Posterior vena cava (tissue), 2 donors: ENCODE measurements at regions of chr3 and their contacts with region 1.

Region 1: GRCh38 chr3:48402281-48402732 is 27.6 kb downstream of the PLXNB1 start:
- DNase-seq: peak; percentile 98

Region 2: DNA sequence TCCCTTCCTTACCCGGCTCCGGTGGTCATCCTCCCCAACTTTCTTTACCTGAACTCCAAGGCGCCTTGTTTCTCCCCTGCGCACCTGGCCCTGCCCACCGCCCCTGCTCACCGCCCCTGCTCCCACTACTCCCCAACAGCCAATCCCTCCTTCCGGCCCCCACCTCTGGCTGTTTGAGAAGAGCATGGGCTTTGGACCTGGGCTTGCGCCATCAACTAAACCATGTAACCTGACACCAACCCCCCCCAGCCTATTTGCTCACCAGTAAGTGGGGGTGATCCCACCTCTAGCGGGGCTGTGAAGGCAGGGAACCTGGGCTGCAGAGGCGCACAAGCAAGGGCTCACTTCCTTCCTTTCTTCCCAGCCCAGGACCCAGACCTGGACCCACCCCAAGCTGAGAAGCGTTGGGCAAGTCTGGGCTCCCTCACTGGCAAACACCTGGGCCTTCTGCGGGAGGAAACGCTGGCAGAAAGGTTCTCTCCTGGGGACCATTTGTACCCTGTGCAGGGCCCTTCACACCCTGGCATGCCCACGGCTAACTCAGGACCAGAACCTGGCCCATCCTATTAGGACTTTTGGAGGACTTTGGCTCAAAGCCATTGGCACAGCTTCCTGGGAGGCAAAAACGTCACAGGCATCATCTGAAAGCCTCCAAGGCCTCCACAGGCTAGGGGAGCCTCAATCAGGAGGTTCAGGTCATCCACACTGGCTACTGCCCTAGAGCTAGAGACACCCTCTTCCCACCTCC is 27.8 kb after region 1 on chr3 and contains the start of gene PLXNB1:
- intact Hi-C with region 1: loop called in 1 of 2 experiments (anchors 2 kb)
- DNase-seq: peak; percentile 86
- total RNA-seq, gene PLXNB1: 76.4 to 76.7 TPM

Region 3: GRCh38 chr3:48439820-48440589 is 37.7 kb after region 1 on chr3 and contains the starts of genes CCDC51 and TMA7:
- intact Hi-C with region 1: loop called in 1 of 2 experiments (anchors 2 kb)
- DNase-seq: peak; percentile 99
- total RNA-seq, gene CCDC51: 13.0 to 16.2 TPM
- total RNA-seq, gene TMA7: 112 to 178 TPM